ENCODE measurements at regions of chr9 and their contacts with region 1.

Region 1: GRCh38 chr9:115022760-115023434 is 92.5 kb upstream of the TNFSF8 start:
- DNase-seq: no peak
- H3K4me3 ChIP-seq: no peak overlapping the region
- H3K27ac ChIP-seq: no peak overlapping the region
- H3K4me1 ChIP-seq: no peaks in the 10 kb centered on the region
- H3K27me3 ChIP-seq: no peaks in the 10 kb centered on the region
- CTCF ChIP-seq: no peak
- EP300 ChIP-seq: no peak
- POLR2A ChIP-seq: no peak

Region 2: GRCh38 chr9:115524453-115525059 is 501.7 kb after region 1 on chr9:
- intact Hi-C with region 1: loop called (anchors 10 kb)
- DNase-seq: peak in 1 of 2 donors; percentile 88
- H3K4me3 ChIP-seq: no peak overlapping the region
- H3K27ac ChIP-seq: peak overlapping the region in 1 of 5 donors; percentile 29
- H3K4me1 ChIP-seq: peaks cover 0 to 17% (median 3%) of the 10 kb centered on the region in 4 donors
- H3K27me3 ChIP-seq: no peaks in the 10 kb centered on the region
- CTCF ChIP-seq: peak in 5 of 7 experiments; percentile 54 to 61 (median 61)
- EP300 ChIP-seq: no peak
- POLR2A ChIP-seq: no peak

Measured in stomach (tissue), 19 donors.